ENCODE measurements at regions of chr12 and their contacts with region 1.

Region 1: GRCh38 chr12:122895705-122896636 is at the start of gene VPS37B:
- DNase-seq: no peak
- ATAC-seq: peak; percentile 66
- H3K4me3 ChIP-seq: peak within 1 kb of the TSS; percentile 78 to 91
- H3K27ac ChIP-seq: peak within 1 kb of the TSS; percentile 100
- H3K4me1 ChIP-seq: peaks cover 43% of the 10 kb centered on the region
- H3K27me3 ChIP-seq: no peaks in the 10 kb centered on the region
- CTCF ChIP-seq: no peak
- total RNA-seq, gene VPS37B: 76.7 TPM

Region 2: DNA sequence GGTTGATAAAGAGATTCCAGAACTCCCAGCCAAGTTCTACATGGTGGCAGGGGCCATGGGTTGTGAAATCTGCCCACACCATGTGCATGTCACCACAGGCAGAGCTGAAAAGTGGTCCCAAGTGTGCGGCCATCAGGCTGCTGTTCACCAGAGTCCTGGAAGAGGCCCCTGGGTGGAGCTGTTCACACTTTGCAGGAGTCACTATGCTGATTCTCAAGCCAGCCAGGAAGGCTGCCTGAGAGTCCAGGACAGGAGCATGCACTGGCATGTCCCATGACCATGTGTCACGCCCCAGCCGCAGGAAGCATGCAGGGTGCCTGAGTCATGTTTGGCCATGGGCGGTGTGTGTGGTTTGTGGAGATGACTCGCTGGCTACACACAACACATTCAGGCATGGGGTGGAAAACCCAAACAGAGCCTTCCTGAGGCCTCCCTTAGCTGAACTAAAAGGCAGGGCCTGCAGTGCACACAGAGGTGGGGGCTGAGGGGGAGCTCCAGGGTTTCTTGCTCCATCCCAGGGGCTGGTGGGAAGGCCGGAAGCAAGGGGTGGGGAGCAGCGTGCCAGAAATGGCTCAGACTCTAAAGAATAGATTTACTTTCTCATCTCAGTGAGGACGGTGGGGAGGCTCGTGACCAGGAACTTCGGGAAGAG is 50.8 kb after region 1 on chr12:
- CTCF ChIA-PET with region 1: interaction called, 8 read pairs
- POLR2A ChIA-PET with region 1: interaction called, 6 read pairs
- in situ Hi-C with region 1: no loop called
- intact Hi-C with region 1: loop called (anchors 5 kb)
- DNase-seq: peak; percentile 91
- ATAC-seq: peak; percentile 72
- H3K4me3 ChIP-seq: no peak overlapping the region
- H3K27ac ChIP-seq: peak overlapping the region; percentile 85
- H3K4me1 ChIP-seq: peaks cover 68% of the 10 kb centered on the region
- H3K27me3 ChIP-seq: no peaks in the 10 kb centered on the region
- CTCF ChIP-seq: no peak

Region 3: DNA sequence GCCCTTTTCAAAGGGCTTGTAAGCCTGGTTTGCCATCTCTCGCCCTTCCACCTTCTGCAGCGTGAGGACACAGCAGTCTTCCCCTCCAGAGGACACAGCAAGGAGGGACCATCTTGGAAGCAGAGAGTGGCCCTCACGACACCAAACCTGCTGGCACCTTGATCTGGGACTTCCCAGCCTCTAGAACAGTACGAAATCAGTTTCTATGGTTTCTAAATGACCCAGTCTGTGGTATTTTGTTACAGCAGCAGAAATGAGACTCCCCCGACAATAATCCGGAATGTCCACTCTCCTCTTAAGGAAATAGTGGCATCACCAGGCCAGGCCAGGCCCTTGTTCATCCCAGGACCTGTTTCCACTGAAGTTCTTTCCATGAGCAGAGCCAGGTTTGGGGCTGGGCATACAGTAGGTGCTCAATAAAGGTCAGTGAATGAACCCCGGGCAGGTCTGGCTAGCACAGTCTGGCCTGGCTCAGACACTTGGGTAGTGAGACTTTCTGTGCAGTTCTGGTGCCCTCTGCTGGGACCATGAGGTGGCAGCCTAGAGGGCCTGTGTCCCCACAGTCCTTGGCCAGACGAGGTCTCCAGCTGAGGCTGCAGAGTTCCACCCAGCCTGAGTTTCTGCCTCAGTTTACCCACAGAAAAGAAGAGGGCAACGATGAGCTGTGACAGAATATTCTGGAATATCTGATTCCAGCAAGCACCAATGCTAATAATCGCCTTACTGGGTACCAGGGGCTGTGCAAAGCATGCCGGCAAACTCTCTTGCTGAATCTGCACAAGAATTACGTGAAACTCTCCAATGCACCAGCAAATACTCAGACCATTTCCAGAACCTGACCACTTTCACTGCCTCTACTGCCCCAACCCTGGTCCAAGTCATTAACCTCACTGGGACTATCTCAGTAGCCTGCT is 56.3 kb after region 1 on chr12:
- CTCF ChIA-PET with region 1: interaction called, 11 read pairs
- POLR2A ChIA-PET with region 1: no interaction called
- in situ Hi-C with region 1: no loop called
- intact Hi-C with region 1: no loop called
- DNase-seq: no peak
- ATAC-seq: peak; percentile 97
- H3K4me3 ChIP-seq: no peak overlapping the region
- H3K27ac ChIP-seq: peak overlapping the region; percentile 82
- H3K4me1 ChIP-seq: peaks cover 27% of the 10 kb centered on the region
- H3K27me3 ChIP-seq: no peaks in the 10 kb centered on the region
- CTCF ChIP-seq: peak; percentile 95